HCT116 (cell line): ENCODE measurements at regions of chr12 and their contacts with region 1.

Region 1: GRCh38 chr12:96219698-96220206 is 25.6 kb downstream of the ELK3 start:
- DNase-seq: peak; percentile 90
- ATAC-seq: peak; percentile 97
- H3K4me3 ChIP-seq: peak overlapping the region; percentile 33 to 46
- H3K27ac ChIP-seq: peak overlapping the region; percentile 84
- H3K4me1 ChIP-seq: peaks cover 18 to 44% of the 10 kb centered on the region in 2 experiments
- H3K27me3 ChIP-seq: no peaks in the 10 kb centered on the region
- CTCF ChIP-seq: no peak
- POLR2A ChIP-seq: no peak
- RAD21 ChIP-seq: no peak

Region 2: GRCh38 chr12:96132819-96133218 is 86.9 kb before region 1 on chr12:
- CTCF ChIA-PET with region 1: interaction called, 11 read pairs
- POLR2A ChIA-PET with region 1: no interaction called
- RAD21 ChIA-PET with region 1: interaction called in 1 of 2 experiments, 3 read pairs
- intact Hi-C with region 1: no loop called
- DNase-seq: no peak
- ATAC-seq: peak; percentile 64
- H3K4me3 ChIP-seq: no peak overlapping the region
- H3K27ac ChIP-seq: no peak overlapping the region
- H3K4me1 ChIP-seq: peaks cover 0 to 22% of the 10 kb centered on the region in 2 experiments; a peak in 1 of 4 replicates
- H3K27me3 ChIP-seq: 0 out of 2 replicates have a peak, but pooled peaks cover 6% of the 10 kb centered on the region
- CTCF ChIP-seq: peak; percentile 41 to 51 (median 42); a peak in 4 of 6 replicates
- POLR2A ChIP-seq: no peak
- RAD21 ChIP-seq: peak; percentile 67

Region 3: DNA sequence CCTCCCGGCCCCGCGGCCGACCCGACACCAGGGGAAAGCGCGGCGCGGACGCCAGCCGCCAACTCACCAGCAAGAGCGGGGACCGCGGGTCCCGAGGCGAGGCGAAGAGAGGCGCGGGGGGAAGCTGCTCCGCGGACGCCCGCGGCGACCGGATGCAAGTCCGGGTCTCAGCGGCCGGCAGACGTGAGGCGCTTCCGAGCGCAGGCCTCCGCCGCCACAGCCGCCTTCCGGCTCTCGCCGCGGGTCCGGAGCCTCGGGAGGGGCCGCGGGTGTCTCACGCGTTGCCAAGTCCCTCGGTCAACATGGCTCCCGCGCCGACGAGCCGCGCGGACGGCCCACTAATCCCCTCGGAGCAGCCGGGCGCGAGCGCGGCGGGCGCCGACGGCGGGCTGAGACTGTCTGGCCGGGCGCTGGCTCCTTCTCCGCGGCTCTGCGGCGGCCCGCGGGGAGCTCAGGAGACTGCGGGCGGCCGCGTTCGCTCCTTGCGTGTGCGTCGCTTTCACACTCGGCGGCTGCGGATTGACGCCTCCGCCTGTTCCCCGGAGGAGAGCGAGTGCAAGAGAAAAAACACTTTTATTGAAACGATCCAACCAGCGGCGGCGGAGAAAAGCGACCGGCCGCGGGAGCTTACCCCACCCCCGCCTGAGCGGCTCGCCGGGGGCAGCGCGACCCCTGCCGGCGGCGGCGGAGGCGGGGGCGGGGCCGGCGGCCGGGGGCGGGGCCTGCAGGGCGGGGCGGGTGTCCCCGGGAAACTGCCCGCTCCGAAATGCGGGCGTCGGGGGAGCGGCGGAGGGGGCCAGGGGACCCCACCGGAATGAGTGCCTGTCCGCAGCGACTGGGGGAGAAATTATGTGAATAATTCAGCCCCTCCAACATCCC is 180.4 kb after region 1 on chr12 and contains the start of gene CDK17:
- CTCF ChIA-PET with region 1: interaction called, 3 read pairs
- POLR2A ChIA-PET with region 1: no interaction called
- RAD21 ChIA-PET with region 1: interaction called in 1 of 2 experiments, 3 read pairs
- intact Hi-C with region 1: loop called (anchors 5 kb)
- DNase-seq: peak; percentile 50
- ATAC-seq: peak; percentile 76
- H3K4me3 ChIP-seq: peak within 1 kb of the TSS; percentile 59 to 70
- H3K27ac ChIP-seq: peak within 1 kb of the TSS; percentile 98
- H3K4me1 ChIP-seq: peaks cover 10 to 20% of the 10 kb centered on the region in 2 experiments; a peak in 3 of 4 replicates
- H3K27me3 ChIP-seq: no peaks in the 10 kb centered on the region
- CTCF ChIP-seq: peak in 1 of 3 experiments; percentile 39; a peak in 1 of 6 replicates
- POLR2A ChIP-seq: peak; percentile 39
- RAD21 ChIP-seq: peak; percentile 49
- total RNA-seq, gene CDK17: 21.4 TPM